Gastrocnemius medialis (tissue), 4 donors: ENCODE measurements at regions of chr12 and their contacts with region 1.

Region 1: DNA sequence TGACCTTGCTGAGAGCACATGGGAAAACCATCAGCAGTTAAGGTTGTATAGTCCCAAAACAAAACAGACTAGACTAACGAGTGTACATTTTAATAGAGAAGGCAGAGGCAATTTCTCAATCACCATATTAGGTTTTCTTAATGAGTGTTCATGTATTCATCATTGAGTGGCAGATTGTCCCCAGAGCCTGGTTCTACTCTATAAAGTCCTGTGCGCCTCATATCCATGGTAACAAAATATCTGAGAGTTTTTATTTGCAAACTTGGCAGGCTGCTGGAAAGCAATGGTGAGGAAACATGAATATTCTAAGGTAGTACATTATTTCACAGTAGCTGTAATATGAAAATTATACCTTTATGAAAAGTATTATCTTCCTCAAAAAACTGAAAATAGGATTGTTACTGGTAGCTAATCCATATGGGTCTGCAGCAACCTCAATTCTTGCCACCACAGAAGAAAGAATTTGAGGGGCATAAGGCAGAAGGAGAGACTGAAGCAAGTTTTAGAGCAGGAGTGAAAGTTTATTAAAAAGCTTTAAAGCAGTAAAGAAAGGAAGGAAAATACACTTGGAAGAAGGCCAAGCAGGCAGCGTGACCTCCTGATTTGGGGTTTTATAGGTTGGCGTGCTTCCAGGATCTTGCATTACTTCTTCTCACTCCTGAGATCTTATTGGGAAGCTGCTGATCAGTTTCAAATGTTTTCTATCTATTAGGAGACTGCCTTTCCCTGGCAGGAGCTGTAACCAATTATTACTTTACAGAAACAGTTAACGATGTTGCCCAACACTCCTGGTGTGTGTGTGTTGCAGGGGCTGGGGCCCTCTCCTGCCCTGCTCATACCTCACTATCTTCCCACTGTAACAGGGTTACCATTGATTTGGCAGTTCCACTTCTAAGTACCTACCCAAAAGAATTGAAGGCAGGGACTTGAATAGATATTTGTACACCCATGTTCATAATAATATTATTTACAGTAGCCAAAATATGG is 154.0 kb upstream of the NUDT4 start:
- DNase-seq: no peak
- ATAC-seq: no peak
- H3K4me3 ChIP-seq: no peak overlapping the region
- H3K27ac ChIP-seq: peak overlapping the region in 2 of 4 donors; percentile 14 to 26
- H3K4me1 ChIP-seq: peaks cover 9 to 10% of the 10 kb centered on the region in 2 donors
- H3K27me3 ChIP-seq: no peaks in the 10 kb centered on the region
- CTCF ChIP-seq: no peak
- POLR2A ChIP-seq: no peak

Region 2: GRCh38 chr12:93183940-93184671 is 39.6 kb before region 1 on chr12:
- in situ Hi-C with region 1: no loop called
- intact Hi-C with region 1: loop called (anchors 1 kb)
- DNase-seq: peak in 1 of 2 donors; percentile 38
- ATAC-seq: peak; percentile 32 to 72
- H3K4me3 ChIP-seq: no peak overlapping the region
- H3K27ac ChIP-seq: peak overlapping the region; percentile 53 to 71 (median 60)
- H3K4me1 ChIP-seq: peaks cover 19 to 23% of the 10 kb centered on the region in 2 donors
- H3K27me3 ChIP-seq: no peaks in the 10 kb centered on the region
- CTCF ChIP-seq: no peak
- POLR2A ChIP-seq: no peak

Region 3: DNA sequence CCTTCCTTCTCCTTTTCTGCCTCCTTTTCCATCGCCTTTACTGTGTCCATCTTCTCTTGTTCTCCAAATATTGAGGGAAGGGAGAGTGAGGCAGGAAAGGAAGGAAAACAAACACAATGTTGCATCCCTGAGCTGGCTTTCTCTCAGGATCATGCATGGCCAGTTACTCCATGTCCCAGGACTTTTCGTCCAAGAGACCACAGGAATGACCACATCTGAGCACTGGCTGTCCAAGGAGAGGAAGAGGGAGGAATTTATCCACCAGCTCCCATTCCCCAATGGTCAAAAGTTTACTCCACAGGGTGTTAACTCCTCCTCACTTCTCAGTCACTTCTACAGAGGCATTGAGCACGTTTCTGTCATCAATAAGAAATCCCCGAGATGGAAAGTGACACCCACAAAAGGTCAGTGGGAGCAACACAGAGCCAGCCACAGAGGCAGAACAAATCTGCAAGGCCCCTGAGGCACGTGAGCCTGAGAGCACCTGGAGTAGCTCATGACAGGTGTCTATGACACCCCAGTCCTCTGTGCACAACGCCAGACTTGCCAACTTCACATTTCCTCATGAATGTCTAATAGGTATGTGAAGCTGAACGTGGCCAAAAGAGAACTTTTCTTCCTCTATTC is 23.3 kb before region 1 on chr12:
- in situ Hi-C with region 1: no loop called
- intact Hi-C with region 1: loop called (anchors 2 kb)
- DNase-seq: peak; percentile 31 to 36
- ATAC-seq: peak; percentile 55 to 77
- H3K4me3 ChIP-seq: no peak overlapping the region
- H3K27ac ChIP-seq: peak overlapping the region in 3 of 4 donors; percentile 12 to 78 (median 25)
- H3K4me1 ChIP-seq: peaks cover 24 to 27% of the 10 kb centered on the region in 2 donors
- H3K27me3 ChIP-seq: no peaks in the 10 kb centered on the region
- CTCF ChIP-seq: no peak
- POLR2A ChIP-seq: no peak

Region 4: DNA sequence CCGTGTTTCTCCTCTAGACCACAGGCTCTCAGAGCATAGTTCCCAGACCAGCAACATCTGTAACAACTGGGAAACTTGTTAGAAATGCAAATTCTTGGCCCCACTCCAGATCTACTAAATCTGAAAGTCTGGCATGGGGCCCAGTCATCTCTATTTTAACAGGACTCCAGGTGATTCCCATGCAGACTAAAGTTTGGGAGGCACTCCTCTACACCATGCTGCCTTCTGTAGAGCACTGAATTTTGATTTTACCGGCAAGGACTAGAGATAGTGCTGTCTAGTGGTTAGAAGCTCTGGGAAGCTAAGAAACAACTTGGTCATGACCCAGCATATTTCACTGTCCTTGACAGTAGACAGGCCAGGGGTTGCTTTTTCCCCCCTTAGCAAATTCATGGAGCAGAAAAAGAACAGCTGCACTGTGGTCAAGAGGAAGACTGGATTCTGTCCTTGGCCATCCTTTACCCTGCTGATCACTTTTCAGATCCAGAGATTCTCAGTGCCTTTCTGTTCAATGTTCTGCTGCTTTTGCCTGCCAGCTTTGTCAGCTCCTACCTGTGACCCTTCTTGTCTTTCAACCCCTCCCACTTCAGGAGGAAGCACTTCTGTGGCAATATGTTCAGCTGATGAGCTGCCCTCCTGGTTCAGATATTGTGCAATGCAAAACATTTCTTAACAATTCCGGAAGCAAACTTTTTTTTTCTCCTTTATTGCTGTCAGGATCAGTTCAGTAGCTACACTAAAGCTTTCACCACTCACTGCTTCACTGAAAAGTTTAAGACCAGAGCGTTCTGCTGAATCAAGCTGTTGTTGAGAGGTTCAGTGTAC is 20.2 kb after region 1 on chr12:
- in situ Hi-C with region 1: no loop called
- intact Hi-C with region 1: no loop called
- DNase-seq: peak in 1 of 2 donors; percentile 45
- ATAC-seq: peak; percentile 85 to 92
- H3K4me3 ChIP-seq: no peak overlapping the region
- H3K27ac ChIP-seq: peak overlapping the region; percentile 42 to 71 (median 52)
- H3K4me1 ChIP-seq: peaks cover 14 to 17% of the 10 kb centered on the region in 2 donors
- H3K27me3 ChIP-seq: no peaks in the 10 kb centered on the region
- CTCF ChIP-seq: no peak
- POLR2A ChIP-seq: peak in 1 of 2 donors; percentile 10

Region 5: GRCh38 chr12:93279565-93280412 is 56.1 kb after region 1 on chr12:
- in situ Hi-C with region 1: no loop called
- intact Hi-C with region 1: no loop called
- DNase-seq: no peak
- ATAC-seq: peak in 1 of 2 donors; percentile 34
- H3K4me3 ChIP-seq: no peak overlapping the region
- H3K27ac ChIP-seq: no peak overlapping the region
- H3K4me1 ChIP-seq: peaks cover 0 to 7% of the 10 kb centered on the region in 2 donors
- H3K27me3 ChIP-seq: no peaks in the 10 kb centered on the region
- CTCF ChIP-seq: no peak
- POLR2A ChIP-seq: no peak